Activated CD4-positive, alpha-beta T cell treated with anti-CD3 and anti-CD28 coated beads, Interleukin-2, amount 10 ng/mL, durations not matched to agents 7 days and 5 days (primary cell): ENCODE measurements at regions of chr16 and their contacts with region 1.

Region 1: GRCh38 chr16:46843898-46844642 is 13.1 kb upstream of the C16orf87 start:
- DNase-seq: no peak
- H3K4me3 Mint-ChIP-seq: no peak overlapping the region
- H3K27ac Mint-ChIP-seq: no peak overlapping the region
- H3K4me1 Mint-ChIP-seq: no peaks in the 10 kb centered on the region
- H3K27me3 Mint-ChIP-seq: peaks cover 4% of the 10 kb centered on the region

Region 2: GRCh38 chr16:46763147-46763546 is 80.9 kb before region 1 on chr16:
- CTCF ChIA-PET with region 1: no interaction called
- POLR2A ChIA-PET with region 1: no interaction called
- DNase-seq: no peak
- H3K4me3 Mint-ChIP-seq: no peak overlapping the region
- H3K27ac Mint-ChIP-seq: no peak overlapping the region
- H3K4me1 Mint-ChIP-seq: peaks cover 3% of the 10 kb centered on the region
- H3K27me3 Mint-ChIP-seq: no peaks in the 10 kb centered on the region

Region 3: DNA sequence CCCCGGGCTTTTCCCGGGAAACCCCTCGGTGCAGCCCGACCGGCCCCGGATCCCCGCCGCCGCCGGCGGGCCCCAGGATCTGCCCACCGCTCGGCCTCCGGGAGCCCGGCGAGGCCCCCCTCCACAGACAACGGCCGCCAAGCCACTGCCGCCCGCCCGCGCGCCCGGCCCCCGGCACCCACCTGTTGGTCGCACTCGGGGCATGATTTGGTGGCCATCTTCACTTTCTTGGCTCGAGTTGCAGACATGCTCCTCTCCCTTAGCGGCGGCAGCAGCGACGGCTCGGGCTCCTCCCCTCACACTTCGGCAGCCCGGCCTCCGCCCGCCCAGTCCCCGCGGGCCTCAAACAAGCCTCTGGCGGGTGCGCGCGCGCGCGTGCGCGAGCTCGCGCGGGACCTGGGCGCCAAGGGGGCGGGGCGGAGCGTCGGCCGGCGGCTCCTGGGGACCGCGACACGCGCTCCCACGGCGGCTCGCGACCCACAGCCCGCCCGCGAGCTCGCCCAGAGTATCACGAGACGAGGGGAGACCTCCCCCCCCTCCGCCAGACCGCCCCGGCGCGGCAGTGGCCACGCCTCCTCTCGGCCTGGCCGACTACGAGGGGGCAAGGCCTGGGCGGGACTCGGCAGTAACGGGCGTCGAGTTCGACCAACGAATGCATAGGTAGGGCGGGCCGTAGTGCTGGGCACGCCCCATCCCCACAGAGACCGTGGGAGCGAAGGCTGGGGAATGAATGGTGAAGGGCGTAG is 13.0 kb before region 1 on chr16 and contains the start of gene C16orf87:
- CTCF ChIA-PET with region 1: no interaction called
- POLR2A ChIA-PET with region 1: no interaction called
- DNase-seq: peak; percentile 93
- H3K4me3 Mint-ChIP-seq: peak within 1 kb of the TSS; percentile 98
- H3K27ac Mint-ChIP-seq: peak within 1 kb of the TSS; percentile 97
- H3K4me1 Mint-ChIP-seq: peaks cover 37% of the 10 kb centered on the region
- H3K27me3 Mint-ChIP-seq: peaks cover 9% of the 10 kb centered on the region
- total RNA-seq, gene C16orf87: 10.3 to 11.2 TPM

Region 4: GRCh38 chr16:46973207-46973995 is 129.3 kb after region 1 on chr16 and contains the start of gene DNAJA2:
- CTCF ChIA-PET with region 1: no interaction called
- POLR2A ChIA-PET with region 1: interaction called, 11 read pairs
- DNase-seq: peak; percentile 90
- H3K4me3 Mint-ChIP-seq: peak within 1 kb of the TSS; percentile 92
- H3K27ac Mint-ChIP-seq: peak within 1 kb of the TSS; percentile 100
- H3K4me1 Mint-ChIP-seq: peaks cover 51% of the 10 kb centered on the region
- H3K27me3 Mint-ChIP-seq: no peaks in the 10 kb centered on the region
- total RNA-seq, gene DNAJA2: 52.8 to 54.5 TPM